ENCODE measurements at regions of chr1 and their contacts with region 1.

Region 1: DNA sequence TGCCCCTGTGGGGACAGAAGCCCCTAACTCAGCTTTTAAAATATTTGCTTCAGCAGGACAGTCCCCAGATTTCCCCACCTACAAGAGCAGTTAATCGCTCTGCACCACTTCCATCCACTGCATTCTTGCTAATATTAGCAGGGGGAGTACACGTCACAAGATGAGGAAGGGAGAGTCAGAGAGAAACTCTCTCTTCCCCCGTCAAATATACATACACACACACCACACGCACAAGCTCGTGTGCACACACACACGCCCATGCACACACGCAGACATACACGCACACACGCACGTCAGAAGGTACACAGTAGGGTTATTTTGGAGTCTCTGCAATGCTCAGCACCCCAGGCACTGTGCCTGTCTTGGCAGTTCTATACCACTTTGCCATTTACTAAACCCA is 2.1 kb downstream of the CLCA1 start:
- DNase-seq: no peak
- ATAC-seq: no peak
- H3K4me3 ChIP-seq: no peak overlapping the region
- H3K27ac ChIP-seq: no peak overlapping the region
- H3K4me1 ChIP-seq: no peaks in the 10 kb centered on the region
- H3K27me3 ChIP-seq: peaks cover 0 to 8% (median 0%) of the 10 kb centered on the region in 7 donors
- CTCF ChIP-seq: no peak

Region 2: DNA sequence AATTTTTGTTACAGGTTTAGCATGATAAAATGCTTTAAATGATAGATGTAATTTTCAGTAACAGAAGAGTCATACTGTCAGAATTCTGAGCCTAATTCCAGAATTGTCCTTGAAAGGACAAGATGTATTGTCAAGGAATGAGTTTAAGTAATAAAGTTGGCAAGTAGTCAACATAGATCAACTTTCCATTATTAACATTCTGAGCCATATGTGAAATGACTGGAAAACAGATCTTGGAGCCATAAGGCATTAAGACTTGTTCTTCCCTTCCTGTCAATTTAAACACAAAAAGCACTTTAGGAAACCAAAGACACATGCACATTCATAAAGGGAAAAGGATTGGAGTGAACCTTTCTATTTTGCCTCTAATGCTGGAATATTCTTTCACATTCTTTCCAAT is 181.7 kb before region 1 on chr1:
- intact Hi-C with region 1: no loop called
- DNase-seq: no peak
- ATAC-seq: no peak
- H3K4me3 ChIP-seq: no peak overlapping the region
- H3K27ac ChIP-seq: no peak overlapping the region
- H3K4me1 ChIP-seq: no peaks in the 10 kb centered on the region
- H3K27me3 ChIP-seq: no peaks in the 10 kb centered on the region
- CTCF ChIP-seq: no peak

Region 3: GRCh38 chr1:86507935-86508582 is 37.2 kb after region 1 on chr1:
- intact Hi-C with region 1: loop called in 6 of 10 experiments (anchors 2 to 5 kb)
- DNase-seq: no peak
- ATAC-seq: no peak
- H3K4me3 ChIP-seq: no peak overlapping the region
- H3K27ac ChIP-seq: no peak overlapping the region
- H3K4me1 ChIP-seq: peaks cover 0 to 22% (median 13%) of the 10 kb centered on the region in 9 donors
- H3K27me3 ChIP-seq: no peaks in the 10 kb centered on the region
- CTCF ChIP-seq: peak; percentile 17 to 70 (median 58)

Region 4: GRCh38 chr1:86687595-86687994 is 216.7 kb after region 1 on chr1:
- intact Hi-C with region 1: loop called in 2 of 10 experiments (anchors 5 kb)
- DNase-seq: no peak
- ATAC-seq: no peak
- H3K4me3 ChIP-seq: no peak overlapping the region
- H3K27ac ChIP-seq: no peak overlapping the region
- H3K4me1 ChIP-seq: no peaks in the 10 kb centered on the region
- H3K27me3 ChIP-seq: no peaks in the 10 kb centered on the region
- CTCF ChIP-seq: peak in 5 of 9 donors; percentile 21 to 44 (median 39)

Region 5: DNA sequence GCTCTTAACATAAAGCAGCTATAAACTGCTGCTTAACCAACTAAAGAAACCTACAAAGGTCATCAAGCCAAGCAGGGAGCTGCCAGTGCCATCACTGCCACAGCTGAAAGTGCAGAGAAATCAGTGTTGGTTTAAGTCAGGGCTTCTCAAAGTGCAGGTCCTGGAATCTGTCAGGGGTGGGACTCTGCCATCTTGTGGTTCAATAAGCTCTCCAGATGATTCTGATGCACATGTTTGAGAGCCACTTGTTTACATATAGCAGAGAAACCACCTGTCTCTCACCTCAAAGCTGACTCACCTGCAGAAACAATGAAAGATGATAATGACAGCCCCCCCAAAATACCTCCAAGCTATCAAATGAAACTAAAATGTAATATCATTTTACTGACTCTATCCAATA is 282.8 kb after region 1 on chr1:
- intact Hi-C with region 1: loop called in 1 of 10 experiments (anchors 10 kb)
- DNase-seq: no peak
- ATAC-seq: no peak
- H3K4me3 ChIP-seq: no peak overlapping the region
- H3K27ac ChIP-seq: no peak overlapping the region
- H3K4me1 ChIP-seq: peaks cover 0 to 3% (median 0%) of the 10 kb centered on the region in 9 donors
- H3K27me3 ChIP-seq: no peaks in the 10 kb centered on the region
- CTCF ChIP-seq: peak in 2 of 9 donors; percentile 11 to 16

Measured in heart right ventricle (tissue), 16 donors.